Upper lobe of right lung (tissue), 1 donor: ENCODE measurements at regions of chr18 and their contacts with region 1.

Region 1: DNA sequence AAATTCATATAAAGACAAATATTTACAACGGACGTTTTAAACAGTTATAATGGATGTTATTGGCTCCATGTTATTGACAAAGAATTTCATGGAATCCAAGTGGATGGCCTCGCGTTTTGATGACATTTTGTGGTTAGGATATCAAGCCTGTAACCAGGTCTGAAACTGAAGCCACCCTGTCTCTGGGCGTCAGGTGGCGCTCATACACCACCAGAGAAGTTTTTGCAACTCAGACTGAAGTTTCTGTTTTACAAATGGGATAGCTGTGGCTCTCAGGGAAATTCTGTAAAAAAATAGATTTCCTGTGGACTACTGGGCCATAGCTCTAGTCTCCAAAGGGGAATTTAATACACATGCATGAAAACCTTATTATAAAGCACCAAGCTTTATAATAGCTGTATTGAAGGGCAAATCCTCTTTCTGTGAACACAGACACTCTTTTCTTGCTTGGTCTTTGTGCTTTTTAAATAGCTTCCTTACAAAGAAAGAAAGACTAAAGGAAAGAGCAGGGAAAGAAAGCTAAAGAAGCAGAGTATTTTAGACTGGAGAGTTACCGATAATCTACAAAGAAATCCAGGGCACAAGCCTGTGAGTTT is 86.7 kb downstream of the C18orf54 start:
- DNase-seq: no peak
- ATAC-seq: peak; percentile 61
- H3K4me3 ChIP-seq: no peak overlapping the region
- H3K27ac ChIP-seq: no peak overlapping the region
- H3K4me1 ChIP-seq: no peaks in the 10 kb centered on the region
- H3K27me3 ChIP-seq: no peaks in the 10 kb centered on the region
- CTCF ChIP-seq: peak; percentile 56

Region 2: GRCh38 chr18:54240629-54241107 is 203.7 kb before region 1 on chr18:
- intact Hi-C with region 1: no loop called
- DNase-seq: peak; percentile 88
- ATAC-seq: peak; percentile 90
- H3K4me3 ChIP-seq: no peak overlapping the region
- H3K27ac ChIP-seq: peak overlapping the region; percentile 30
- H3K4me1 ChIP-seq: peaks cover 10% of the 10 kb centered on the region
- H3K27me3 ChIP-seq: no peaks in the 10 kb centered on the region
- CTCF ChIP-seq: no peak

Region 3: GRCh38 chr18:54647176-54647575 is 202.8 kb after region 1 on chr18:
- intact Hi-C with region 1: loop called (anchors 10 kb)
- DNase-seq: no peak
- ATAC-seq: no peak
- H3K4me3 ChIP-seq: no peak overlapping the region
- H3K27ac ChIP-seq: no peak overlapping the region
- H3K4me1 ChIP-seq: no peaks in the 10 kb centered on the region
- H3K27me3 ChIP-seq: no peaks in the 10 kb centered on the region
- CTCF ChIP-seq: peak; percentile 29

Region 4: GRCh38 chr18:54702686-54703085 is 258.3 kb after region 1 on chr18:
- intact Hi-C with region 1: no loop called
- DNase-seq: no peak
- ATAC-seq: no peak
- H3K4me3 ChIP-seq: no peak overlapping the region
- H3K27ac ChIP-seq: no peak overlapping the region
- H3K4me1 ChIP-seq: no peaks in the 10 kb centered on the region
- H3K27me3 ChIP-seq: no peaks in the 10 kb centered on the region
- CTCF ChIP-seq: no peak